Calu3 (cell line): ENCODE measurements at regions of chr10 and their contacts with region 1.

Region 1: GRCh38 chr10:35642027-35642792 is at the start of gene FZD8:
- DNase-seq: peak; percentile 93
- H3K4me3 Mint-ChIP-seq: peak within 1 kb of the TSS; percentile 87
- H3K27ac Mint-ChIP-seq: no peak within 1 kb of the TSS
- H3K4me1 Mint-ChIP-seq: no peaks in the 10 kb centered on the region
- H3K27me3 Mint-ChIP-seq: peaks cover 21% of the 10 kb centered on the region
- CTCF ChIP-seq: no peak
- total RNA-seq, gene FZD8: 3.2 and 3.7 TPM in 2 replicates

Region 2: GRCh38 chr10:35103882-35104281 is 538.3 kb before region 1 on chr10:
- CTCF ChIA-PET with region 1: no interaction called
- intact Hi-C with region 1: no loop called
- DNase-seq: no peak
- H3K4me3 Mint-ChIP-seq: no peak overlapping the region
- H3K27ac Mint-ChIP-seq: no peak overlapping the region
- H3K4me1 Mint-ChIP-seq: no peaks in the 10 kb centered on the region
- H3K27me3 Mint-ChIP-seq: peaks cover 13% of the 10 kb centered on the region
- CTCF ChIP-seq: no peak

Region 3: GRCh38 chr10:35781643-35782035 is 139.4 kb after region 1 on chr10:
- CTCF ChIA-PET with region 1: interaction called, 3 read pairs
- intact Hi-C with region 1: loop called (anchors 1 kb)
- DNase-seq: peak; percentile 45
- H3K4me3 Mint-ChIP-seq: no peak overlapping the region
- H3K27ac Mint-ChIP-seq: no peak overlapping the region
- H3K4me1 Mint-ChIP-seq: peaks cover 18% of the 10 kb centered on the region
- H3K27me3 Mint-ChIP-seq: no peaks in the 10 kb centered on the region
- CTCF ChIP-seq: peak; percentile 18

Region 4: GRCh38 chr10:36872702-36873393 is 1230.6 kb after region 1 on chr10:
- CTCF ChIA-PET with region 1: interaction called, 16 read pairs
- intact Hi-C with region 1: no loop called
- DNase-seq: no peak
- H3K4me3 Mint-ChIP-seq: no peak overlapping the region
- H3K27ac Mint-ChIP-seq: no peak overlapping the region
- H3K4me1 Mint-ChIP-seq: no peaks in the 10 kb centered on the region
- H3K27me3 Mint-ChIP-seq: no peaks in the 10 kb centered on the region
- CTCF ChIP-seq: no peak